ENCODE measurements at regions of chr7 and their contacts with region 1.

Region 1: DNA sequence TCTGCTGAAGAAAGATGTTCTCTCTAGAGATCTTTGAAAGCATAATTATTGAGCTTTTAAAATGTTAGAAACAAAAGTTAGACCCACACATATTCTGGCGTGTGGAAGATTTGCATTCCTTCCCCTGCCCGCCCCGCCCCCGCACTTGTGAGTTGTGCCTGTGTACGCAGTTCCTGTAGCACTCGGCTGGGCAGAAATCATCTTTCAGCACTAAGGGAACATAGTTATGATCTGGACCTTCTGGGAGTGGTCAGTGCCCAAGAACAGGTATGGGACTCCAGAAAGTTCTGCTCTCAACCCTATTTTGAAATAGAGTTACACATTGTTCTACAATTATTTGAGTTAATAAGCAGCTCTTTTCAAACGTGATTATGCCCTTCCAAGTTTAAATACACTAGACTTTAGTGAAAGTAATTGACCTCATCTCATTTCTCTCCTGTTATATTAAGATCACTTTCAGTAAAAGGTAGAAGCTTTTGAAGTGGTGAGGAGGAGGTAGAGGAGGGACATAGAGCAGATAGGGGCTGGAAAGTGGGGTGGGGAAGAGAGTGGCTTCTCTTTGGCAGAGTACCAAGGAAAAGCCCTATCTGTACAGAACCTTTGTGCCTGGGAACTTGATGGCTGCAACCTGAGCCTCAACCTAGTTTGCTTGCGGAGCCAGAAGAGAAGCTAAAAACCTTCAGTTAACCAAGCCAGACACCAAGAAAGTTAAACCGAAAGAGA is 5.7 kb downstream of the BLVRA start:
- DNase-seq: no peak
- ATAC-seq: no peak; the same call in 1 of the 2 replicates
- H3K4me3 ChIP-seq: no peak overlapping the region
- H3K27ac ChIP-seq: no peak overlapping the region
- H3K4me1 ChIP-seq: peaks cover 9% of the 10 kb centered on the region
- H3K27me3 ChIP-seq: no peaks in the 10 kb centered on the region
- CTCF ChIP-seq: no peak
- POLR2A ChIP-seq: no peak
- RAD21 ChIP-seq: no peak

Region 2: DNA sequence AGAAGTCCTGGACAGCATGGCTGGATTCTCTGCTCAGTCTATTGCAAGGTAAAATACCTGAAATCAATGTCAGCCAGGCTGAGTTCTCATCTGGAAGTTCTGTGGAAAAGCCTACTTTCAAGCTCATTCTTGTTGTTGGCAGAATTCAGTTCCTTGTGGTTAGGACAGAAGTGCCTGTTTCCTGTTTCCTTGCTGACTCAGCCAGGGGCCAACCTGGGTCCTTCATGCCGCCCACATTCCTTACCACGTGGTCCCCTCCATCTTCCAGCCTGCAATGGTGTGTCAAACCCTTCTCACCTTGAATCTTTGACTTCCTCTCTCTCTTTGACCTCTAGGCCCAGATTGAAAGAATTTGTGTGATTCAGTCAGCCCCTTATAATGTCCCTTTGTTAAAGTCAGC is 378.3 kb before region 1 on chr7:
- CTCF ChIA-PET with region 1: no interaction called
- POLR2A ChIA-PET with region 1: no interaction called
- dilution Hi-C with region 1: no loop called
- in situ Hi-C with region 1: no loop called
- intact Hi-C with region 1: no loop called
- DNase-seq: peak; percentile 1
- ATAC-seq: no peak
- H3K4me3 ChIP-seq: no peak overlapping the region
- H3K27ac ChIP-seq: no peak overlapping the region
- H3K4me1 ChIP-seq: no peaks in the 10 kb centered on the region
- H3K27me3 ChIP-seq: no peaks in the 10 kb centered on the region; the same call in 1 of the 2 replicates
- CTCF ChIP-seq: no peak
- POLR2A ChIP-seq: no peak
- RAD21 ChIP-seq: no peak

Region 3: GRCh38 chr7:43729214-43729923 is 34.8 kb before region 1 on chr7 and contains the start of gene COA1:
- CTCF ChIA-PET with region 1: no interaction called
- POLR2A ChIA-PET with region 1: no interaction called
- dilution Hi-C with region 1: no loop called
- in situ Hi-C with region 1: no loop called
- intact Hi-C with region 1: loop called (anchors 2 kb)
- DNase-seq: peak; percentile 91
- ATAC-seq: peak; percentile 98
- H3K4me3 ChIP-seq: peak within 1 kb of the TSS; percentile 98
- H3K27ac ChIP-seq: peak within 1 kb of the TSS; percentile 89
- H3K4me1 ChIP-seq: peaks cover 2% of the 10 kb centered on the region; the same call in 1 of the 2 replicates
- H3K27me3 ChIP-seq: no peaks in the 10 kb centered on the region
- CTCF ChIP-seq: no peak
- POLR2A ChIP-seq: peak; percentile 59; the same call in 1 of the 2 replicates
- RAD21 ChIP-seq: peak; percentile 9; the same call in 1 of the 2 replicates
- total RNA-seq, gene COA1: 59.5 and 66.4 TPM in 2 replicates

Region 4: GRCh38 chr7:43834463-43835251 is 70.5 kb after region 1 on chr7:
- CTCF ChIA-PET with region 1: no interaction called
- POLR2A ChIA-PET with region 1: no interaction called
- dilution Hi-C with region 1: no loop called
- in situ Hi-C with region 1: no loop called
- intact Hi-C with region 1: no loop called
- DNase-seq: peak; percentile 40
- ATAC-seq: no peak
- H3K4me3 ChIP-seq: peak overlapping the region; percentile 3; the same call in 1 of the 2 replicates
- H3K27ac ChIP-seq: no peak overlapping the region
- H3K4me1 ChIP-seq: no peaks in the 10 kb centered on the region
- H3K27me3 ChIP-seq: peaks cover 2% of the 10 kb centered on the region; the same call in 1 of the 2 replicates
- CTCF ChIP-seq: no peak
- POLR2A ChIP-seq: no peak
- RAD21 ChIP-seq: no peak

Region 5: GRCh38 chr7:44990520-44991023 is 1226.4 kb after region 1 on chr7:
- CTCF ChIA-PET with region 1: no interaction called
- POLR2A ChIA-PET with region 1: no interaction called
- dilution Hi-C with region 1: no loop called
- in situ Hi-C with region 1: no loop called
- intact Hi-C with region 1: no loop called
- DNase-seq: peak; percentile 77
- ATAC-seq: no peak
- H3K4me3 ChIP-seq: no peak overlapping the region
- H3K27ac ChIP-seq: peak overlapping the region; percentile 74; the same call in 1 of the 2 replicates
- H3K4me1 ChIP-seq: peaks cover 8% of the 10 kb centered on the region
- H3K27me3 ChIP-seq: no peaks in the 10 kb centered on the region
- CTCF ChIP-seq: no peak
- POLR2A ChIP-seq: no peak
- RAD21 ChIP-seq: no peak